Naive thymus-derived CD8-positive, alpha-beta T cell (primary cell): ENCODE measurements at regions of chr3 and their contacts with region 1.

Region 1: DNA sequence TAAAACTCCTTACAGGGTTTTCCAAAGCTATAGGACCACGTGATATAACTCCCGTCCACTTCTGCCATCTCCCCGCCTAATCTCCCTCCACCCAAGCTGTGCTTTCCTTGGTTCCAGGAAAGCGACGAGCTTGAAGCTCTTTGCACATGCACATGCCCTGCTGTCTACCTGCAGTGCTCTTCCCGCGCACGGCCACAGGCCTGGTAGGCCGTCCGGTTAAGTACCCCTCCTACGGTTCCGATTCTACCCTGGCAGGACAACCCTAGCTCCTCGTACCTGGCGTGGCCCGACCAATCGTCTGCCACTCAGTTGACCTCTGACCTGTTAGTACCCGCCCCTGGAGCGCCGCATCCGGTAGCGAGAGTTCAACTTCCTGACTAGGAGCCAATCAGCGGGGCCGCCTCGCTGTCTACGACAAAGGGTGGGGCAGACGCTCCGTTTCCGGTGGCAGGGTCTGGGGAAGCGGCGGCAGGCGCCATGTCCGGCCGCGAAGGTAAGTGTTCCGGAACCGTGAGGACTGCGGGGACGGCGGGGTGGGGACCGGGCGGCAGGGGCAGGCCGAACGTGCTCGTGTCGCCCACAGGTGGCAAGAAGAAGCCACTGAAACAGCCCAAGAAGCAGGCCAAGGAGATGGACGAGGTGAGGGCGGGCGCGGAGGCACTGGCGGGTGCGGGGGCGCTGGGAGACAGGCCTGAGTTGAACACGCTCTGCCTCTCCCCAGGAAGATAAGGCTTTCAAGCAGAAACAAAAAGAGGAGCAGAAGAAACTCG is at the starts of genes CCDC51 and TMA7:
- DNase-seq: peak; percentile 93 to 99 (median 96)
- ATAC-seq: peak; percentile 92 to 93
- H3K4me3 Mint-ChIP-seq: peak within 1 kb of the TSS; percentile 89 to 100 (median 97)
- H3K27ac Mint-ChIP-seq: peak within 1 kb of the TSS; percentile 95 to 100 (median 99)
- H3K4me1 Mint-ChIP-seq: peaks cover 15 to 51% (median 39%) of the 10 kb centered on the region in 4 donors
- H3K27me3 Mint-ChIP-seq: no peaks in the 10 kb centered on the region
- polyA plus RNA-seq, gene CCDC51: 8.6 to 12.9 (median 11.8) TPM
- polyA plus RNA-seq, gene TMA7: 714 to 931 (median 847) TPM

Region 2: GRCh38 chr3:48418651-48419050 is 21.4 kb before region 1 on chr3:
- POLR2A ChIA-PET with region 1: no interaction called
- DNase-seq: no peak
- ATAC-seq: no peak
- H3K4me3 Mint-ChIP-seq: no peak overlapping the region
- H3K27ac Mint-ChIP-seq: no peak overlapping the region
- H3K4me1 Mint-ChIP-seq: peaks cover 0 to 7% (median 5%) of the 10 kb centered on the region in 4 donors
- H3K27me3 Mint-ChIP-seq: no peaks in the 10 kb centered on the region

Region 3: GRCh38 chr3:48429317-48429959 is 10.6 kb before region 1 on chr3:
- POLR2A ChIA-PET with region 1: interaction called, 13 read pairs
- DNase-seq: peak; percentile 31 to 82 (median 60)
- ATAC-seq: peak; percentile 73 to 80
- H3K4me3 Mint-ChIP-seq: peak overlapping the region in 9 of 10 donors; percentile 77 to 89 (median 84)
- H3K27ac Mint-ChIP-seq: peak overlapping the region in 4 of 10 donors; percentile 19 to 88 (median 68)
- H3K4me1 Mint-ChIP-seq: peaks cover 3 to 17% (median 12%) of the 10 kb centered on the region in 4 donors
- H3K27me3 Mint-ChIP-seq: peaks cover 0 to 2% (median 0%) of the 10 kb centered on the region in 5 donors

Region 4: DNA sequence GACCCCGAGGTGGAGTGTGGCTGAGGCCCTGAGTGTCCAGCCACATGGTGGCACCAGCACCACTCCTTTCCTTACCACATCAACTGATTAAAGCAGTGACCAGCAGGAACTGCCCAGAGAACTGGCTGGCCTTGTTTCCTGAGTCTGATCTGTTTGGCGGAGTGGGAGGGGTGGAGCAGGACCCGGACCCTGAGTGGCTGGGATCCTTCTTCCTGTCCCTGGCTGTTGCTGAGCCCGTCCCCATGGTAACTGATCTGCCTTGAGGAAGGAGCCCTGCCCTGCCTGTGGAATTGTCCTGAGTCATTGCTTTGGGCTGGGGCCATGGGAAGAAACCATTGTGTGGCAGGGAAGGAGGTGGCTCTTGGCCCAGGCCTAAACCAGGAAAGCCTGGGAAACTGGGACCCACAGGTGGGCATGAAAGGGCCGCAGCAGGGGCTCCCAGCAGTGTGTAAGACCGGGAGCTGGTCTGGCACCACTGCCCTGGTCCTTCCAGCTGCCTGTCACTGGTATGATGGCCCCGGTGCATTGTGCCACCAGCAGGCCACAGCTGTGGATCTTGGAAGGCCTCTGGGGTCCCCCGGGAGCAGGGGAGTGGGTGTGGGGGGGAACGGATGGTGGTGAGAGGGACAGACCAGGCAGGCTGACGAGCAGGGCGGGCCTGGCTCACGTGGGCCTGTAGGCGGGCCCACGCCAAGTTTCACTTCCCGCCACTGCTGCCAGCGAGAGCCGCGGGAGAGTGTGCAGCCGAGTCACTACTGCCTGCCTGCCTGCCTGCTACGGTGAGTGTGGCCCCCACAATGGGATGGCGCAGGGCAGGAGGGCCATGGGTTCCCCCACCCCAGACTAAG is 25.8 kb after region 1 on chr3:
- POLR2A ChIA-PET with region 1: interaction called, 25 read pairs
- DNase-seq: peak; percentile 63 to 82 (median 73)
- ATAC-seq: peak; percentile 97
- H3K4me3 Mint-ChIP-seq: peak overlapping the region; percentile 84 to 93 (median 90)
- H3K27ac Mint-ChIP-seq: peak overlapping the region; percentile 79 to 100 (median 96)
- H3K4me1 Mint-ChIP-seq: peaks cover 23 to 60% (median 59%) of the 10 kb centered on the region in 4 donors
- H3K27me3 Mint-ChIP-seq: no peaks in the 10 kb centered on the region

Region 5: DNA sequence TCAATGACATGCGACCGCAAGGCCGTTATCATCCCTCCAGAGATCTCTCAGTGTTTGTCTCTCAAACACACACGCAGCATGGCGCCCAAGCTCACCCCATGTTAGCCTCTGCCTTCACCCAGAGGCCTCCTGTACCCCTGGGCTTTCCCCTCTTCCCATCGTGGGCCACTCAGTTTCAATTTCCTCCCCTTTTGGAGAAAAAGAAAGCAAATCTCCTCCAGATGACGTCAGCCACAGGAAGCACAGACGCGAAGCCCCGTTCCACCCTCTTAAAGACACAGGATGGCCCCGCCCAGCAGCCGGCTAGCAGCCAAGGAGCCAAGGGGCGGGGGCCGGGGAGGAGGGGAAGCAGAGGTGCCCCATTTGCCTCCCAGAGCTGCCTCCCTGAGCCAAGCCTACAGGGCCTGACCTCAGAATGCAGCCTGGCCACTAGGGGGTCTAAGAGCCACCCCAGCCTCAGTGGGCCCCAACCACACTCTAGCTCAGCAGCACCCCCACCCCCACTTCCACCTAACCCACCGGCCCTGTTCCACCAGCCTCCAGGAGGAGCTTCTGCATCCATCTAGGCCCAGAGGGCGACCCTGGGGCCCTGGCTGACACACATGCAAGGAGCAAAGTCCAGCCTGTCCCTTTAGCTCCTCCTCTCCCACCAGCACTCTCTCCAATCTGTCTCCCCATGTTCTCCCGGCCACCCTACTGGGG is 33.1 kb after region 1 on chr3:
- POLR2A ChIA-PET with region 1: interaction called, 37 read pairs
- DNase-seq: peak; percentile 87 to 97 (median 94)
- ATAC-seq: peak; percentile 86 to 93
- H3K4me3 Mint-ChIP-seq: peak overlapping the region; percentile 84 to 100 (median 94)
- H3K27ac Mint-ChIP-seq: peak overlapping the region; percentile 95 to 100 (median 98)
- H3K4me1 Mint-ChIP-seq: peaks cover 26 to 76% (median 61%) of the 10 kb centered on the region in 4 donors
- H3K27me3 Mint-ChIP-seq: no peaks in the 10 kb centered on the region

Region 6: GRCh38 chr3:48478596-48479555 is 38.9 kb after region 1 on chr3:
- POLR2A ChIA-PET with region 1: interaction called, 37 read pairs
- DNase-seq: peak; percentile 35 to 88 (median 65)
- ATAC-seq: peak; percentile 88 to 89
- H3K4me3 Mint-ChIP-seq: peak overlapping the region; percentile 70 to 93 (median 88)
- H3K27ac Mint-ChIP-seq: peak overlapping the region; percentile 91 to 99 (median 97)
- H3K4me1 Mint-ChIP-seq: peaks cover 22 to 48% (median 43%) of the 10 kb centered on the region in 4 donors
- H3K27me3 Mint-ChIP-seq: no peaks in the 10 kb centered on the region

Region 7: GRCh38 chr3:48507351-48508061 is 67.5 kb after region 1 on chr3:
- POLR2A ChIA-PET with region 1: interaction called, 32 read pairs
- DNase-seq: peak; percentile 47 to 88 (median 70)
- ATAC-seq: peak; percentile 86 to 88
- H3K4me3 Mint-ChIP-seq: peak overlapping the region in 8 of 10 donors; percentile 19 to 67 (median 38)
- H3K27ac Mint-ChIP-seq: peak overlapping the region; percentile 17 to 83 (median 78)
- H3K4me1 Mint-ChIP-seq: peaks cover 26 to 59% (median 48%) of the 10 kb centered on the region in 4 donors
- H3K27me3 Mint-ChIP-seq: no peaks in the 10 kb centered on the region

Region 8: GRCh38 chr3:48556793-48557626 is 117.0 kb after region 1 on chr3 and contains the start of gene PFKFB4:
- POLR2A ChIA-PET with region 1: interaction called, 13 read pairs
- DNase-seq: peak; percentile 97 to 100 (median 99)
- ATAC-seq: peak; percentile 90 to 92
- H3K4me3 Mint-ChIP-seq: peak within 1 kb of the TSS; percentile 80 to 96 (median 88)
- H3K27ac Mint-ChIP-seq: peak within 1 kb of the TSS; percentile 12 to 89 (median 74)
- H3K4me1 Mint-ChIP-seq: peaks cover 12 to 41% (median 23%) of the 10 kb centered on the region in 4 donors
- H3K27me3 Mint-ChIP-seq: no peaks in the 10 kb centered on the region
- polyA plus RNA-seq, gene PFKFB4: 1.1 to 3.3 (median 1.9) TPM

Region 9: GRCh38 chr3:48788544-48789162 is 348.6 kb after region 1 on chr3:
- POLR2A ChIA-PET with region 1: no interaction called
- DNase-seq: peak in 4 of 10 donors; percentile 8 to 29 (median 12)
- ATAC-seq: peak; percentile 58 to 61
- H3K4me3 Mint-ChIP-seq: peak overlapping the region in 3 of 10 donors; percentile 5 to 44 (median 28)
- H3K27ac Mint-ChIP-seq: peak overlapping the region; percentile 31 to 91 (median 76)
- H3K4me1 Mint-ChIP-seq: peaks cover 12 to 23% (median 19%) of the 10 kb centered on the region in 4 donors
- H3K27me3 Mint-ChIP-seq: no peaks in the 10 kb centered on the region